PC-9 (cell line): ENCODE measurements at regions of chr1 and their contacts with region 1.

Region 1: GRCh38 chr1:42035830-42036604 is 117.2 kb upstream of the GUCA2B start:
- DNase-seq: peak; percentile 78 to 99
- H3K4me3 ChIP-seq: peak overlapping the region; percentile 86
- H3K27ac ChIP-seq: no peak overlapping the region
- H3K4me1 ChIP-seq: peaks cover 18% of the 10 kb centered on the region
- H3K27me3 ChIP-seq: no peaks in the 10 kb centered on the region
- CTCF ChIP-seq: no peak

Region 2: GRCh38 chr1:41023279-41023990 is 1012.6 kb before region 1 on chr1:
- CTCF ChIA-PET with region 1: no interaction called
- POLR2A ChIA-PET with region 1: no interaction called
- intact Hi-C with region 1: no loop called
- DNase-seq: no peak
- H3K4me3 ChIP-seq: no peak overlapping the region
- H3K27ac ChIP-seq: no peak overlapping the region
- H3K4me1 ChIP-seq: no peaks in the 10 kb centered on the region
- H3K27me3 ChIP-seq: no peaks in the 10 kb centered on the region
- CTCF ChIP-seq: peak; percentile 46

Region 3: GRCh38 chr1:41662061-41662764 is 373.8 kb before region 1 on chr1:
- CTCF ChIA-PET with region 1: no interaction called
- POLR2A ChIA-PET with region 1: no interaction called
- intact Hi-C with region 1: no loop called
- DNase-seq: peak in 1 of 2 experiments; percentile 63
- H3K4me3 ChIP-seq: peak overlapping the region; percentile 81; the same call in 1 of the 2 replicates
- H3K27ac ChIP-seq: no peak overlapping the region
- H3K4me1 ChIP-seq: peaks cover 53% of the 10 kb centered on the region
- H3K27me3 ChIP-seq: no peaks in the 10 kb centered on the region
- CTCF ChIP-seq: no peak

Region 4: GRCh38 chr1:41678111-41678878 is 357.7 kb before region 1 on chr1:
- CTCF ChIA-PET with region 1: no interaction called
- POLR2A ChIA-PET with region 1: no interaction called
- intact Hi-C with region 1: loop called (anchors 10 kb)
- DNase-seq: no peak
- H3K4me3 ChIP-seq: no peak overlapping the region
- H3K27ac ChIP-seq: no peak overlapping the region
- H3K4me1 ChIP-seq: peaks cover 13% of the 10 kb centered on the region
- H3K27me3 ChIP-seq: no peaks in the 10 kb centered on the region
- CTCF ChIP-seq: no peak

Region 5: GRCh38 chr1:41902125-41902524 is 133.9 kb before region 1 on chr1:
- CTCF ChIA-PET with region 1: no interaction called
- POLR2A ChIA-PET with region 1: no interaction called
- intact Hi-C with region 1: loop called (anchors 1 kb)
- DNase-seq: peak; percentile 87 to 91
- H3K4me3 ChIP-seq: peak overlapping the region; percentile 52; the same call in 1 of the 2 replicates
- H3K27ac ChIP-seq: peak overlapping the region; percentile 95
- H3K4me1 ChIP-seq: peaks cover 56% of the 10 kb centered on the region
- H3K27me3 ChIP-seq: no peaks in the 10 kb centered on the region
- CTCF ChIP-seq: no peak

Region 6: DNA sequence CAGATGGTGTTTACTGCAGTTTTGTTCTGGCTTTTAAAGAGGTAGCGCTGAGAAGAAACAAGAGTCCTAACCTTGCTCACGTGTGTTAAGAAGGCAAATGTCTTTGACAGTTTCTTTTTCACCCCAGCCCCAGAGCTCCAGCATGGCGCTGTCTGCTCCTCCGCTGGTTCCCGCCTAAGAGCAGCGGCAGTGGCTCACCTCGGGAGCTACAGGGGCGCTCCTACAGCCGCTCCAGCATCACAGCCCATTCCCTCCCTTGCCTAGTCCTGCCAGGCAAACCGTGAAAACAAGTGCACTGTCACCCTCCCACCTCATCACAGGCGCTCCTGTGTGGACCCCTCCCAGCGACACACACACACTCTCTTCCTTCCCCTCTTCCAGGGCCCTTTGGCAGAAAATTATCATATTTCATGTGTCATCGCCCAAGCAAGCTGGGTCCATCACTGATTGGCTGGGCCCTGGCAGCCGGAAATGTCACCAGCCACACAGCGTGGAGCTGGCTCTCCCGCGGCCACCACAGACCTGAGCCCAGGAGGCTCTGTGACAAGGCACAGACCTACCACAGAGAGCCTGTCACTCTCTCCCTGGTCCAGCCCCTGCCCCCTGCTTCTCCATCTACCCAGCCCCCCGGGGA is 116.1 kb before region 1 on chr1:
- CTCF ChIA-PET with region 1: no interaction called
- POLR2A ChIA-PET with region 1: no interaction called
- intact Hi-C with region 1: loop called (anchors 1 kb)
- DNase-seq: peak; percentile 83
- H3K4me3 ChIP-seq: peak overlapping the region; percentile 87
- H3K27ac ChIP-seq: peak overlapping the region; percentile 75
- H3K4me1 ChIP-seq: peaks cover 57% of the 10 kb centered on the region
- H3K27me3 ChIP-seq: no peaks in the 10 kb centered on the region
- CTCF ChIP-seq: no peak